ENCODE measurements at regions of chr5 and their contacts with region 1.

Region 1: GRCh38 chr5:81851481-81852178 is 100.7 kb upstream of the SSBP2 start:
- DNase-seq: peak; percentile 98

Region 2: DNA sequence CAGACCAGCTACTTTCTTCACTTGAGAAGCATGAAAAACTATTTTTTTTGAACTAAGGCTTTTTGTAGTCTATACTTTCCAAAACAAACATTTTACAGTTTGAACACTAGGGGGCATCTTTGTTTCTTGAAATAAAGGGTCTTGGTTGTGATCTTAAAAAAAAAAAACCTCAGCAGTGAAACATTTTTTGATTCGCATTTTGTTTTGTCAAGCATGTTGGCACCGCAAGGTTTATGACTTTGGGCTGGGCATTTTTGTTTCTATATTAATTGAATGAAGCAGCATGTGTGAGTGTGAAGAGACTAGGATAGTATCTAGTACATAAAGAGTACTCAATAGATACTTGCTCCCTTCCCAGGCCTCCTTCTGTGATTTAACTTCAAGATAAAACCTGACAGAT is 426.1 kb before region 1 on chr5:
- intact Hi-C with region 1: loop called (anchors 5 kb)
- DNase-seq: no peak

Region 3: GRCh38 chr5:81506900-81507588 is 344.6 kb before region 1 on chr5:
- intact Hi-C with region 1: loop called (anchors 1 kb)
- DNase-seq: no peak

Region 4: GRCh38 chr5:81787474-81788242 is 64.0 kb before region 1 on chr5:
- intact Hi-C with region 1: loop called (anchors 1 kb)
- DNase-seq: no peak

Region 5: GRCh38 chr5:81971712-81972495 is 120.3 kb after region 1 on chr5 and contains the start of gene ATG10:
- intact Hi-C with region 1: loop called (anchors 1 kb)
- DNase-seq: peak; percentile 97
- total RNA-seq, gene ATG10: 7.1 TPM

Region 6: GRCh38 chr5:82165740-82166530 is 314.3 kb after region 1 on chr5:
- intact Hi-C with region 1: loop called (anchors 5 kb)
- DNase-seq: no peak

Measured in cardiac septum (tissue), 1 donor.